Adrenal gland (tissue), 19 donors: ENCODE measurements at regions of chr17 and their contacts with region 1.

Region 1: DNA sequence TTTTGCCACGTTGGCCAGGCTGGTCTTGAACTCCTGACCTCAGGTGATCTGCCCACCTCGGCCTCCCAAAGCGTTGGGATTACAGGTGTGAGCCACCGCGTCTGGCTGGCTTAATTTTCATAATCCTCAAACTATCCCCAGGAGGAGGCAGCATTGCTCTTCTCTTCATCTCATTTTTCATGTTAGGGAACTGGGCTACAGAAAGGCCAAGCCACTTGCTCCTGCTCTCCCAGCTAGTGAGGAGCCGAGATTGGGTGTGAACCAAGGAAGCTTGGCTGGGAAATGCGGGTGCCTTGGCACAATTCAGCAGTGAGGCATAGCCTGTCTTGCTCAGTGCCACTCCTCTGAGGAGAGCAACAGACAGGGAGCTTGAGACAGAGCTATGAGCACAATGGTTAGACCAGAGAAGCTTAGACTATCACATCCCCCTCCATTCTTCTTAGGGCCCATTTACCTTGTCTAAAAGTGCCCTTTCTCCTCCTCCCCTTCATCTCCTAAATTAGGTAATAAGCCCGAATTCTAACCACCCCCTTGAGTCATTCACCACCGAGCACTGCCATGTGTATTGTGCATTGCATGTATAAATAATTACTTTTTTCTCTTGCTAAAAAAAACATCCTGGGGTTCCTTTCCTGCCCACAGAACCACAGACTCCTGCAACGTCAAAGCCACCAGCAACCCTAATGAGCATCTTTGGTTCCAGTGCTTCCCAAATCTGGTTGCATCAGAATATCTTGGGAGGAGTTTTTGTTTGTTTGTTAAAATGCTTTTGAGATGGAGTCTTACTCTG is 20.0 kb upstream of the KIF19 start:
- DNase-seq: no peak
- H3K4me3 ChIP-seq: no peak overlapping the region
- H3K27ac ChIP-seq: no peak overlapping the region
- H3K4me1 ChIP-seq: no peaks in the 10 kb centered on the region
- H3K27me3 ChIP-seq: peaks cover 4% of the 10 kb centered on the region
- CTCF ChIP-seq: no peak
- POLR2A ChIP-seq: no peak

Region 2: GRCh38 chr17:74182041-74182723 is 123.9 kb before region 1 on chr17:
- intact Hi-C with region 1: no loop called
- DNase-seq: peak in 1 of 7 donors; percentile 79
- H3K4me3 ChIP-seq: no peak overlapping the region
- H3K27ac ChIP-seq: peak overlapping the region in 1 of 5 donors; percentile 49
- H3K4me1 ChIP-seq: no peaks in the 10 kb centered on the region
- H3K27me3 ChIP-seq: no peaks in the 10 kb centered on the region
- CTCF ChIP-seq: no peak
- POLR2A ChIP-seq: no peak

Region 3: DNA sequence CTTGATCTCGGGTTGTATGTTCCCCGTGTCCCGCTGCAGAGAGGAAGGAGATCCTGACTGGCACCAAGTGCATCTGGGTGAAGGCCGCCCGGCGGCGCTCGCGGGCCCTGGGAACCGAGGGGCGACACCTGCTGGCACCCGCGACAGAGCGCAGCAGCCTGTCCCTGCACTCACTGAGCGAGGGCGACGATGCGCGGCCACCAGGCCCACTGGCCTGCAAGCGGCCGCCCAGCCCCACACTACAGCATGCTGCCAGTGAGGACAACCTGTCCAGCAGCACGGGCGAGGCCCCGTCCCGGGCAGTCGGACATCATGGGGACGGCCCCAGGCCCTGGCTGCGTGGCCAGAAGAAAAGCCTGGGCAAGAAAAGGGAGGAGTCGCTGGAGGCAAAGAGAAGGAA is 48.1 kb after region 1 on chr17:
- intact Hi-C with region 1: loop called in 1 of 2 experiments (anchors 10 kb)
- DNase-seq: peak in 5 of 7 donors; percentile 30 to 67 (median 43)
- H3K4me3 ChIP-seq: no peak overlapping the region
- H3K27ac ChIP-seq: no peak overlapping the region
- H3K4me1 ChIP-seq: no peaks in the 10 kb centered on the region
- H3K27me3 ChIP-seq: peaks cover 73% of the 10 kb centered on the region
- CTCF ChIP-seq: peak in 5 of 6 experiments; percentile 14 to 44 (median 36)
- POLR2A ChIP-seq: no peak

Region 4: GRCh38 chr17:74361230-74362068 is 55.4 kb after region 1 on chr17 and contains the start of gene BTBD17:
- intact Hi-C with region 1: loop called (anchors 5 to 10 kb)
- DNase-seq: peak; percentile 51 to 77 (median 68)
- H3K4me3 ChIP-seq: no peak within 1 kb of the TSS
- H3K27ac ChIP-seq: peak within 1 kb of the TSS in 1 of 5 donors; percentile 26
- H3K4me1 ChIP-seq: no peaks in the 10 kb centered on the region
- H3K27me3 ChIP-seq: peaks cover 48% of the 10 kb centered on the region
- CTCF ChIP-seq: peak; percentile 52 to 81 (median 69)
- POLR2A ChIP-seq: no peak
- total RNA-seq, gene BTBD17: 0.11 to 1.1 (median 0.69) TPM in 5 of 9 donors, not detected in the others